ENCODE measurements at regions of chr7 and their contacts with region 1.

Region 1: GRCh38 chr7:44123190-44124003 is at the start of gene POLD2:
- DNase-seq: peak; percentile 98
- ATAC-seq: peak; percentile 100
- H3K4me3 Mint-ChIP-seq: peak within 1 kb of the TSS; percentile 86
- H3K27ac Mint-ChIP-seq: peak within 1 kb of the TSS; percentile 85
- H3K4me1 Mint-ChIP-seq: peaks cover 40% of the 10 kb centered on the region
- H3K27me3 Mint-ChIP-seq: no peaks in the 10 kb centered on the region
- CTCF ChIP-seq: no peak
- total RNA-seq, gene POLD2: 243 to 251 TPM

Region 2: DNA sequence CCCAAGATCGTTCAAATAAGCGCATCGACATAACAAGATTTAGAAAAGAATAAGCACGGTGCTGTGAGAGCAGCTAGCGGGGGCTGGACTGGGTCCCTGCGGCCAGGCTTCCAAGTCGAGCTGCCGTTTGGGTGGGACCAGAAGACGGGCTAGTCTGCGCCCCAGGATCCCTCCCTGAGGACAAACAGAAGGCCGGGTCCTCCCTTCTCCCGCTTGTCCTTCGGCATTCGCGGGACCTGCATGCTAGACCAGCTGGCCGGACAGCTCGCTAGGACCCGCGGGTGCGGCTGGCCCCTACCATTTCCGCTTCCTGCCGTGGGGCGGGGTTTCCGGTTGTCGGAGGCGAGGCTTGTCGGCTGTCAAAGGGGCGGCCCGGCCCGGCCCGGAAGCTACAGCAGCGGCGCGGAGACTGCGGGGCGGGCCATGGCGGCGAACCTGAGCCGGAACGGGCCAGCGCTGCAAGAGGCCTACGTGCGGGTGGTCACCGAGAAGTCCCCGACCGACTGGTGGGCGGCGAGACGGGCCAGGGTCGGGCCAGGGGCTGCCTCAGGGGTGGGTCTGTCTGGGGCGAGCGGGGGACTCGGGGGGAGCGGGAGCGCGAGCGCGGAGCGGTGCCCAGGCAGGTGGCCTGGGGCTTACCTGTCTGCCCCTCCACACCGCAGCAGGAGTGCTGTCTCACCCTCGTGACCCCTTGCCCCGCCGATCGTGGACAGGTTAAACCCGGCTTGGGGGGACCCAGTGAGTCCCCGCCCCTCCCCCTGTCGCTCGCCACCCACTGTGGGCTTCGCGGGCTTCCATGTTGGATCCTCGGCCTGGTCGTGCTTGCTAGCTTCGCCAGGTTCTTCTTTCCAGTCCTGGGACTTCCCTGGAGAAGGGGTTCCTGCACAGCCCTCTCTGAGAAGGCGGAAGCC is 78.8 kb before region 1 on chr7 and contains the start of gene DBNL:
- CTCF ChIA-PET with region 1: no interaction called
- POLR2A ChIA-PET with region 1: interaction called, 11 read pairs
- intact Hi-C with region 1: no loop called
- DNase-seq: peak; percentile 94
- ATAC-seq: peak; percentile 65
- H3K4me3 Mint-ChIP-seq: peak within 1 kb of the TSS; percentile 91
- H3K27ac Mint-ChIP-seq: peak within 1 kb of the TSS; percentile 91
- H3K4me1 Mint-ChIP-seq: peaks cover 46% of the 10 kb centered on the region
- H3K27me3 Mint-ChIP-seq: no peaks in the 10 kb centered on the region
- CTCF ChIP-seq: no peak
- total RNA-seq, gene DBNL: 108 to 110 TPM

Region 3: DNA sequence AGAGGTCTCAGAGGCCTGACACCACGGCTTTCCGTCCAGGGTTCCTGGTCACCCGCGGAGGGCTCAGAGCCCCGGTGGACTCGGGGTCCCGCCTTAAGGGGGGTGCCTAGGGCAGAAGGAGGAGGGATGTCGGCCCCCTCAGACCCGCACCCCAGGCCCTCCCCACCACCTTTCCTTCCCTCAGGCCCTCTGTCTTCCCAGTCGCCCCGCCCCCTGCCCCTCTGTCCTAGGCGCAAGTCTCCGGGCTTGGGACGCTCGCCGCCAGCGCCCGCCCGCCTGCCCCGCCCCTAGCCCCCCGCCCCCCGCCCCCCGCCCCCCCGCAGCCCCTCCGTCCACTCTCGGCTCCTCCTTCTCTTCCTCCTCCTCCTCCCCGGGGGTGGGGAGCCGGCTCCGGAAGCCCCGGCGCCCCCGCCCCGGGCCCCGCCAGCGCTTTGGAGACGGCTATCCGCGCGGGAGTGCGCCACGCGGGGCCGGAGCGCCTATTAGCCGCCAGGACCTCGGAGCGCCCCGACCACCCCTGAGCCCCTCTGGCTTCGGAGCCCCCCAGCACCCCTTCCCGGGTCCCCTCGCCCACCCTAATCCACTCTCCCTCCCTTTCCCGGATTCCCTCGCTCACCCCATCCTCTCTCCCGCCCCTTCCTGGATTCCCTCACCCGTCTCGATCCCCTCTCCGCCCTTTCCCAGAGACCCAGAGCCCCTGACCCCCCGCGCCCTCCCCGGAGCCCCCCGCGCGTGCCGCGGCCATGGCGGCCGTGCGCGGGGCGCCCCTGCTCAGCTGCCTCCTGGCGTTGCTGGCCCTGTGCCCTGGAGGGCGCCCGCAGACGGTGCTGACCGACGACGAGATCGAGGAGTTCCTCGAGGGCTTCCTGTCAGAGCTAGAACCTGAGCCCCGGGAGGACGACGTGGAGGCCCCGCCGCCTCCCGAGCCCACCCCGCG is 19.2 kb before region 1 on chr7 and contains the start of gene AEBP1:
- CTCF ChIA-PET with region 1: interaction called, 7 read pairs
- POLR2A ChIA-PET with region 1: interaction called, 10 read pairs
- intact Hi-C with region 1: no loop called
- DNase-seq: peak; percentile 54
- ATAC-seq: peak; percentile 67
- H3K4me3 Mint-ChIP-seq: peak within 1 kb of the TSS; percentile 81
- H3K27ac Mint-ChIP-seq: peak within 1 kb of the TSS; percentile 56
- H3K4me1 Mint-ChIP-seq: peaks cover 19% of the 10 kb centered on the region
- H3K27me3 Mint-ChIP-seq: peaks cover 2% of the 10 kb centered on the region
- CTCF ChIP-seq: no peak
- total RNA-seq, gene AEBP1: 29.1 to 30.4 TPM

Region 4: GRCh38 chr7:44112231-44113000 is 11.0 kb before region 1 on chr7:
- CTCF ChIA-PET with region 1: interaction called, 7 read pairs
- POLR2A ChIA-PET with region 1: interaction called, 13 read pairs
- intact Hi-C with region 1: no loop called
- DNase-seq: no peak
- ATAC-seq: no peak
- H3K4me3 Mint-ChIP-seq: no peak overlapping the region
- H3K27ac Mint-ChIP-seq: no peak overlapping the region
- H3K4me1 Mint-ChIP-seq: no peaks in the 10 kb centered on the region
- H3K27me3 Mint-ChIP-seq: no peaks in the 10 kb centered on the region
- CTCF ChIP-seq: no peak

Measured in activated CD8-positive, alpha-beta T cell treated with anti-CD3 and anti-CD28 coated beads for 36 hours (primary cell).